ENCODE measurements at regions of chr14 and their contacts with region 1.

Region 1: DNA sequence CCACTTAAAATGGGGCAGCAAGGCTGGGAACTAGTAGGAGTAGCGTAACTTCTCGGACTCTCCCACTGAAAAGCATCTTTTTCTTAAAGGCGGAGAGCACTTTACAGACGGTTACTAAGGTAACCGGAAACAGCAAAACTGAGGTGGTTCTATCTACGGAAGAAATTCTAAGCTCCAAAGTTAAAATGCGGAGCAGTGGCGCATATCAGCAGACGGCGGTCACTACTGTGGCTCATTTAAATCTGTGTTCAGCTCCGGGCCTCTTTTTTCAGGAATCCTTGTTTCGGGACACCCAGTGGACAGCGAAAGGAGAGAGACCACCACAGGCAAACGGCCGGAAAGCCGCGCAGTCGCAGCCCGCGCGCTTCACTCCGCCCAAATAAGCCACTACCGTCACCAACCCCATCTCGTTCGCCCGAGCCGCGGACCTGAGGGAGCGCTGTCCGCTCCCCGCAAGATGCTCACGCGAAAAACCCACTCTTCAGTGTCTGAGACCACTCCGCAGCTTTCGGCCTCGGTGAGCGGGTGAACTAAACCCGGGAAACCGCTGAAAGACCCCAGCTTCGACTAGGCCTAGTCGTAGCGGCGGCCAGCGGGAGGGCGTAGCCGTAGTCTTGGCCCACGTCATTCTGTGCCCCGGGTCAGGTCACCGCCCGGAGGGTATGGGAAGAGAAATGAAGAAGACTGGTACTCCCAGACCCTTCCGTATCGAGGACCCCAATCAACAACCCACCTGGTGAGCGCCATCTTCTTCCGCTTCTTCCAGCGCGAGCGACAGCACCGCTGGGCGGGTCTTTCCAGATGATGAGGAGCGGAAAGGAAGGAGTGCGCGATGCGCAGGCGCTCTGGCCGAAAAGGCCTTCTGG is at the start of gene SNW1:
- DNase-seq: peak; percentile 89 to 94 (median 92)
- H3K4me3 ChIP-seq: peak within 1 kb of the TSS; percentile 94 to 98
- H3K4me3 Mint-ChIP-seq: peak within 1 kb of the TSS; percentile 95 to 98 (median 97)
- H3K27ac ChIP-seq: peak within 1 kb of the TSS; percentile 99
- H3K27ac Mint-ChIP-seq: peak within 1 kb of the TSS; percentile 97 to 100 (median 98)
- H3K4me1 ChIP-seq: peaks cover 52% of the 10 kb centered on the region
- H3K4me1 Mint-ChIP-seq: peaks cover 23 to 63% (median 39%) of the 10 kb centered on the region in 4 donors
- H3K27me3 ChIP-seq: no peaks in the 10 kb centered on the region
- H3K27me3 Mint-ChIP-seq: no peaks in the 10 kb centered on the region
- total RNA-seq, gene SNW1: 92.1 to 99.7 TPM

Region 2: GRCh38 chr14:77376771-77377501 is 383.7 kb before region 1 on chr14 and contains the starts of genes SAMD15 and TMED8:
- CTCF ChIA-PET with region 1: no interaction called
- POLR2A ChIA-PET with region 1: interaction called, 4 read pairs
- intact Hi-C with region 1: loop called (anchors 1 kb)
- DNase-seq: peak; percentile 81 to 87 (median 87)
- H3K4me3 ChIP-seq: peak within 1 kb of the TSS; percentile 94 to 97
- H3K4me3 Mint-ChIP-seq: peak within 1 kb of the TSS; percentile 85 to 94 (median 90)
- H3K27ac ChIP-seq: peak within 1 kb of the TSS; percentile 74
- H3K27ac Mint-ChIP-seq: peak within 1 kb of the TSS in 6 of 7 donors; percentile 84 to 95 (median 92)
- H3K4me1 ChIP-seq: peaks cover 46% of the 10 kb centered on the region
- H3K4me1 Mint-ChIP-seq: peaks cover 30 to 42% (median 36%) of the 10 kb centered on the region in 4 donors
- H3K27me3 ChIP-seq: no peaks in the 10 kb centered on the region
- H3K27me3 Mint-ChIP-seq: no peaks in the 10 kb centered on the region
- total RNA-seq, gene SAMD15: 0.11 to 0.38 TPM
- total RNA-seq, gene TMED8: 8.3 to 8.6 TPM

Region 3: DNA sequence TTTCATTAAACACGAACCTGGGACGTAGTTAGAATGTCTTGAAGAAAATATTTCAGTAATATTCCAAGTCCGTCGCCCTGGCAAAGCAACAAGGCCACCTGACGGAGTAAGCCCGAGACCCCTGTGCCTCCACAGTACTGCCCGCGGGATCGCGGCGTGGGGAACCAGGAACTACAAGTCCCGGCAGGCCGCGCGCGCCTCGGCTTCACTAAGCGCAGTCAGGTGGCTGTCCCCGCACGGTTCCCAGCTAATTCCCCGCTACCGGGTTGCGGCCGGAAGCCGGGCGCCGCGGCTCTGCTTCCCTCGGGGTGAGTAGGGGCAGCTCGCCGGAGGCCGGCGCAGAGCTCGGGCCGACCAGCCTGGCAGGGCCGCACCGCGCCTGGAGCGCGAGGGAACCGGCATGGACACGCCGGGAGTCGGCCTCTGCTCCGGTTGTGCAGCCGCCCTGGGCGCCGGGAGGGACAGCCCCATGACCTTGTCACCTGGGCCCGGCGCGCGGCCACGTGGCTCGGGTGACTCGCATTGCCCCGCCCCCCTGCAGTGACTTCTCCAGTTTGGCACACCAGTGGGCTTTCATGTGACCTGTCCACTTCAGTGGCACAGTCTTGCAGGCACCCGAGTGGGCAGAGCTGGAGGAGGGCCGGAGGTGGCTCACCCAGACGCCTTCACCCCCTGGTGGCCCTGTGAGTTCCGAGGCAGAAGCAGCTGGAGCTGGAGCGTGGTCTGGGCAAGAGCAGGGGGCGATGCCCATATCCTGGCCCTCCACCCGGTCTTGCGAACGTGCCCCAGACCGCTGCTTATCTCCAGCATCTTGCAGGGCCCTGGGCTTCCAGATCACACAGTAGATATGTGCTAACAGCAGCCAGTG is 39.5 kb after region 1 on chr14 and contains the start of gene ADCK1:
- CTCF ChIA-PET with region 1: interaction called, 4 read pairs
- POLR2A ChIA-PET with region 1: interaction called, 25 read pairs
- intact Hi-C with region 1: loop called (anchors 1 kb)
- DNase-seq: peak; percentile 83 to 88 (median 85)
- H3K4me3 ChIP-seq: peak within 1 kb of the TSS; percentile 83 to 87
- H3K4me3 Mint-ChIP-seq: peak within 1 kb of the TSS; percentile 83 to 90 (median 86)
- H3K27ac ChIP-seq: peak within 1 kb of the TSS; percentile 71
- H3K27ac Mint-ChIP-seq: peak within 1 kb of the TSS; percentile 77 to 93 (median 91)
- H3K4me1 ChIP-seq: peaks cover 7% of the 10 kb centered on the region
- H3K4me1 Mint-ChIP-seq: peaks cover 2 to 11% (median 9%) of the 10 kb centered on the region in 4 donors
- H3K27me3 ChIP-seq: no peaks in the 10 kb centered on the region
- H3K27me3 Mint-ChIP-seq: no peaks in the 10 kb centered on the region
- total RNA-seq, gene ADCK1: 5.3 to 5.6 TPM

Measured in CD4-positive, alpha-beta memory T cell (primary cell).